H1 (cell line): ENCODE measurements at regions of chr5 and their contacts with region 1.

Region 1: GRCh38 chr5:59506285-59506877 is 387.1 kb downstream of the PDE4D start:
- DNase-seq: no peak
- H3K4me3 ChIP-seq: no peak overlapping the region
- H3K27ac ChIP-seq: no peak overlapping the region
- H3K4me1 ChIP-seq: no peaks in the 10 kb centered on the region
- H3K27me3 ChIP-seq: no peaks in the 10 kb centered on the region
- CTCF ChIP-seq: peak in 1 of 3 experiments; percentile 13; a peak in 1 of 4 replicates
- EP300 ChIP-seq: no peak
- POLR2A ChIP-seq: no peak
- RAD21 ChIP-seq: peak; percentile 52 to 65

Region 2: DNA sequence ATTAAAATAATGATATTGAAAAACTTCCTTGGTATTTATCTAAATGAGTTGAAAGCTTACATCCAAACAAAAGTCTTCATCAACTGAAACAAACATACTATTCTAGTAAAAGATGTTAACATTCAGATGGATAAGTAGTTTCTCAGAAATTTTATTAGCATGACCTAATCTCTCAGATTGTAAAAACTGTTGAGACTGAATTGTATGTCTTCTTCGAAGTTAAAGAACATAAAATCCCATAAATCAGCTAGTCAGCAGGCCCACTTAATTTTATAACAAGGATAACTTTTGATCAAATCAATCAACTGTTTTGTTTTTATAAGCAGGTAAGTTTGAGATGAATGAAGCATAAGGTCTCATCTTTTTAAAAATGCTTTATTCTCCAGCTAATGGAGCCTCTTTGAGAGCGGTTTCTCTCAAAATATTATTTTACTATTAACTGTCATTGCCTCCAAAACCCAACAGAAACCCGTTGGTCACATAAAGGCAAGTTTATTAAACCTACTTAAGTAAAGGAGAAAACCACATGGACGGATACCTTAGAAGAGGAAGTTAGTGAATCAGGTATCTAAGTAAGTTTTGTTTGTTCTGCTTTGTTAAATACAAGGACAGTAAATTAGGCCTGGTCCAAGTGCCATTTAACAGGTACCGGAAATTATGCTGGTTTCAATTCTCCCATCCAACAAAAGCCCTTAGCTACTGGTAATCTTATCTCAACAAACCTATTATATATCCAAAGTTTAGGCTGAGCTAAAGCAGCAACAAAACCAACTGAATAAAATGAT is 69.8 kb before region 1 on chr5:
- CTCF ChIA-PET with region 1: no interaction called
- POLR2A ChIA-PET with region 1: no interaction called
- DNase-seq: no peak
- H3K4me3 ChIP-seq: no peak overlapping the region
- H3K27ac ChIP-seq: no peak overlapping the region
- H3K4me1 ChIP-seq: no peaks in the 10 kb centered on the region
- H3K27me3 ChIP-seq: no peaks in the 10 kb centered on the region
- CTCF ChIP-seq: no peak
- EP300 ChIP-seq: no peak
- POLR2A ChIP-seq: no peak
- RAD21 ChIP-seq: no peak

Region 3: GRCh38 chr5:59460368-59461153 is 45.8 kb before region 1 on chr5:
- CTCF ChIA-PET with region 1: no interaction called
- POLR2A ChIA-PET with region 1: no interaction called
- DNase-seq: no peak
- H3K4me3 ChIP-seq: no peak overlapping the region
- H3K27ac ChIP-seq: no peak overlapping the region
- H3K4me1 ChIP-seq: no peaks in the 10 kb centered on the region
- H3K27me3 ChIP-seq: no peaks in the 10 kb centered on the region
- CTCF ChIP-seq: no peak
- EP300 ChIP-seq: no peak
- POLR2A ChIP-seq: no peak
- RAD21 ChIP-seq: no peak

Region 4: GRCh38 chr5:59587489-59588337 is 81.3 kb after region 1 on chr5:
- CTCF ChIA-PET with region 1: interaction called, 12 read pairs
- POLR2A ChIA-PET with region 1: no interaction called
- DNase-seq: peak; percentile 70 to 73
- H3K4me3 ChIP-seq: peak overlapping the region in 1 of 4 experiments; percentile 35; a peak in 1 of 8 replicates
- H3K27ac ChIP-seq: no peak overlapping the region
- H3K4me1 ChIP-seq: peaks cover 2 to 17% (median 4%) of the 10 kb centered on the region in 4 experiments; a peak in 5 of 7 replicates
- H3K27me3 ChIP-seq: no peaks in the 10 kb centered on the region
- CTCF ChIP-seq: peak; percentile 60 to 69 (median 66)
- EP300 ChIP-seq: no peak
- POLR2A ChIP-seq: no peak
- RAD21 ChIP-seq: peak; percentile 60 to 73

Region 5: GRCh38 chr5:59660737-59661136 is 154.4 kb after region 1 on chr5:
- CTCF ChIA-PET with region 1: interaction called, 40 read pairs
- POLR2A ChIA-PET with region 1: no interaction called
- DNase-seq: no peak
- H3K4me3 ChIP-seq: no peak overlapping the region
- H3K27ac ChIP-seq: no peak overlapping the region
- H3K4me1 ChIP-seq: peaks cover 0 to 3% (median 1%) of the 10 kb centered on the region in 4 experiments; a peak in 2 of 7 replicates
- H3K27me3 ChIP-seq: no peaks in the 10 kb centered on the region
- CTCF ChIP-seq: peak in 2 of 3 experiments; percentile 18 to 37; a peak in 2 of 4 replicates
- EP300 ChIP-seq: no peak
- POLR2A ChIP-seq: no peak
- RAD21 ChIP-seq: peak; percentile 59 to 67

Region 6: DNA sequence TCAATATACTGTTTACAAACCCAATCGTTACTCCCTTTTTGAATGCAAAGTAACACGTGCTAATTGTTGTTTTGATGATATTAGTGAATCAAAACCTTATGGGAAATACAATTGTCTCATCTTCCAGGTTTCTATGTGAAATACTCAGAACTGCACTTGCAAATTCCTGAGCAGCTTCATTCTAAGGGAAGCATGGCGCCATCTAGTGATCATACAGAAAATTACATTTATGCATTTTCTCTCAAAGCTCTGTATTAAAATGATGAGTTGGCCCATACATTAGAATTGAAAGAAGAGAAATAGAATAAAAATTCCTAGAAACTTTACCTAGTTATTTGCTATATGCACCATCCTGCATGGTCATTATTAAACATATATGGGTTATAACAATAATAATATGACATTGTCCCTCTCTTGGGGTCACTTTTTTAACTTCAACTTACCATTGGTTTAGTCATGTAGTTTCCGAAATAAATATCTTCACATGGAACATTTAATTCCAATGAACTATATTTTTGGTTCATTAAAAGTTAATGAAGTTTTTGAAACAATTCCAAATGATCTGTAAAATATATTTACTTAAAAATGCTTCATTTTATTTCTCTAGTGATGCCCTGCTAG is 167.2 kb after region 1 on chr5:
- CTCF ChIA-PET with region 1: interaction called, 21 read pairs
- POLR2A ChIA-PET with region 1: no interaction called
- DNase-seq: no peak
- H3K4me3 ChIP-seq: no peak overlapping the region
- H3K27ac ChIP-seq: no peak overlapping the region
- H3K4me1 ChIP-seq: no peaks in the 10 kb centered on the region
- H3K27me3 ChIP-seq: no peaks in the 10 kb centered on the region
- CTCF ChIP-seq: peak in 2 of 3 experiments; percentile 60 to 65; a peak in 3 of 4 replicates
- EP300 ChIP-seq: no peak
- POLR2A ChIP-seq: no peak
- RAD21 ChIP-seq: peak; percentile 81 to 87

Region 7: GRCh38 chr5:59724482-59725391 is 218.4 kb after region 1 on chr5:
- CTCF ChIA-PET with region 1: interaction called, 26 read pairs
- POLR2A ChIA-PET with region 1: no interaction called
- DNase-seq: peak in 1 of 2 experiments; percentile 63
- H3K4me3 ChIP-seq: no peak overlapping the region
- H3K27ac ChIP-seq: no peak overlapping the region
- H3K4me1 ChIP-seq: no peaks in the 10 kb centered on the region; a peak in 2 of 7 replicates
- H3K27me3 ChIP-seq: no peaks in the 10 kb centered on the region
- CTCF ChIP-seq: peak; percentile 46 to 82 (median 79)
- EP300 ChIP-seq: no peak
- POLR2A ChIP-seq: no peak
- RAD21 ChIP-seq: peak; percentile 91 to 94

Region 8: GRCh38 chr5:59741599-59741998 is 235.2 kb after region 1 on chr5:
- CTCF ChIA-PET with region 1: no interaction called
- POLR2A ChIA-PET with region 1: no interaction called
- DNase-seq: no peak
- H3K4me3 ChIP-seq: no peak overlapping the region
- H3K27ac ChIP-seq: no peak overlapping the region
- H3K4me1 ChIP-seq: no peaks in the 10 kb centered on the region
- H3K27me3 ChIP-seq: no peaks in the 10 kb centered on the region
- CTCF ChIP-seq: no peak
- EP300 ChIP-seq: no peak
- POLR2A ChIP-seq: no peak
- RAD21 ChIP-seq: no peak

Region 9: GRCh38 chr5:59799668-59800346 is 293.4 kb after region 1 on chr5:
- CTCF ChIA-PET with region 1: interaction called, 11 read pairs
- POLR2A ChIA-PET with region 1: no interaction called
- DNase-seq: no peak
- H3K4me3 ChIP-seq: peak overlapping the region in 2 of 4 experiments; percentile 9 to 38; a peak in 1 of 8 replicates
- H3K27ac ChIP-seq: no peak overlapping the region
- H3K4me1 ChIP-seq: peaks cover 0 to 8% (median 0%) of the 10 kb centered on the region in 4 experiments; a peak in 2 of 7 replicates
- H3K27me3 ChIP-seq: no peaks in the 10 kb centered on the region
- CTCF ChIP-seq: peak in 2 of 3 experiments; percentile 52 to 59; a peak in 2 of 4 replicates
- EP300 ChIP-seq: no peak
- POLR2A ChIP-seq: no peak
- RAD21 ChIP-seq: peak; percentile 86 to 90